ENCODE measurements at regions of chr3 and their contacts with region 1.

Region 1: DNA sequence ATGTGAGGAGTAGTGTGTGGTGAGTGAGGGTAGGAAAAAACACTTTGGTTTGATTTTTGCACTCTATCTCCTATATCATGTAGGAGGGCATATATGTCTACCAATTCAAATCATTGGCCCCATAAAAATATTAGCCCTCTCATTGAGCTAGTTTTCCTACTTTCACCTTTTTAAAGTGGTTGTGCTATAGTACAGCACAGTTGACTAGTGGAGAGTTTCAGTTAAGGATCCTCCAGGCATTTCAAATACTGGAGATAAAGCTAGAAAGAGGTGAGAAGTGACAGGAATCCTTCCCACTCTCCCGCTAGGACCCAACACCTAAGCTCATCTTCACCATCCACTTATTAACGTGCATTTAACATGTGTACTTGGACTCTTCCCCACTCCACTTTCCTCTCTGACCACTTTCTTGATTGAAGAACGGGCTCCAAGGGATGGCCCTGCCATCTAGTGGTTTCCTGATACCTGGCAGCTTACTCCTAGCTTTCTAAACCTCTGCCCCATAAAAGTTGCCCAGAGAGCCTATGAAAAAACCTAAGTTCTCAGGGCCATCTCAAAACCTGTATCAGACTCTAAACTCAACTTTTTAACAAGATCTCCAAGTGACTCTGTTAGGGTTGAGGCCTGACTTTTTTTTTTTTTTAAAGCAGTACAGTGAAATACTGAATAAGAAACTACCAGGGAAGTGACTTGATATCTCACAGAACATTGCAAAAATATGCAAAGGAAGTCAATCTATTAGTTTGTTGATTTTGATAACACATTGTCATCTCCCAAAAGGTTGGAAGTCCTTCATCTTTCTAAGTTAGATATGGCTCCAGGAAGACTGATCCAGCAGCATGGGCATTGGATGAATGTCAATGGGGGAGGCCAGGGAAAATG is 17.9 kb downstream of the IL12A start:
- DNase-seq: no peak
- H3K4me3 Mint-ChIP-seq: no peak overlapping the region
- H3K27ac Mint-ChIP-seq: peak overlapping the region; percentile 46
- H3K4me1 Mint-ChIP-seq: peaks cover 49% of the 10 kb centered on the region
- H3K27me3 Mint-ChIP-seq: no peaks in the 10 kb centered on the region

Region 2: DNA sequence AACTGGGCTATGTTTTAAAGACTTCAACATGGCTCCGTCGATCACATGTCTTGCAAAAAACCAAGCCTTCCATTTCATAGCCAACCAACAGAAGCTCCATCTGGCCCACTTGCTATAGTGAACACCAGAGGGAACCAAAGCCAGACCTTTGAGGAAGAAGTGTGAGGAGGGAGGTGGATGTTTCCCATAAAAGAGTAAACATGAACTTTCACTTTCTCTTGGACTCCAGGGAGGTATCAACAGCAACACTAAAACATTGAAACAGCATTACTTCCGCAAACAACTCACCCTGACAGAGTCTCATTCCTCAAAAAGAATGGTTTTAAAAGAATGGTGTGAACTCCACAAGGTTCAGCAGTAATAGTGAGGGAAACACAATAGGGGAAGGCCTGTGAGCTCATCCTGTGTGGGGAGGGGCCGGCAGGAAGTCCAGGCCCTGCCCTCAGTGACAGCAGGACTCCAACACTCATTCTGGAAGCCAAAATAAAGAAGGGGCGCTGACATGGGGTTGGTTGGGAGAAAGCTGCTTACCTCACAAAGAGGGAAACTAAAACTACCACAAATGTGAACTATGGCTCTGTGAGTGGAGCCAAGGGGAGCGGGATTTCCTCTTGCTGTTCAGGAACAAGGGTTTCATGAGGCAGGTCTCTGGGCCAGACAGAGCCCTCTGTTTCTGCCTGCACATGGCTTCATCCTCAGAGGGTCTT is 76.9 kb before region 1 on chr3:
- intact Hi-C with region 1: loop called (anchors 5 kb)
- DNase-seq: no peak
- H3K4me3 Mint-ChIP-seq: no peak overlapping the region
- H3K27ac Mint-ChIP-seq: no peak overlapping the region
- H3K4me1 Mint-ChIP-seq: peaks cover 9% of the 10 kb centered on the region
- H3K27me3 Mint-ChIP-seq: no peaks in the 10 kb centered on the region

Region 3: DNA sequence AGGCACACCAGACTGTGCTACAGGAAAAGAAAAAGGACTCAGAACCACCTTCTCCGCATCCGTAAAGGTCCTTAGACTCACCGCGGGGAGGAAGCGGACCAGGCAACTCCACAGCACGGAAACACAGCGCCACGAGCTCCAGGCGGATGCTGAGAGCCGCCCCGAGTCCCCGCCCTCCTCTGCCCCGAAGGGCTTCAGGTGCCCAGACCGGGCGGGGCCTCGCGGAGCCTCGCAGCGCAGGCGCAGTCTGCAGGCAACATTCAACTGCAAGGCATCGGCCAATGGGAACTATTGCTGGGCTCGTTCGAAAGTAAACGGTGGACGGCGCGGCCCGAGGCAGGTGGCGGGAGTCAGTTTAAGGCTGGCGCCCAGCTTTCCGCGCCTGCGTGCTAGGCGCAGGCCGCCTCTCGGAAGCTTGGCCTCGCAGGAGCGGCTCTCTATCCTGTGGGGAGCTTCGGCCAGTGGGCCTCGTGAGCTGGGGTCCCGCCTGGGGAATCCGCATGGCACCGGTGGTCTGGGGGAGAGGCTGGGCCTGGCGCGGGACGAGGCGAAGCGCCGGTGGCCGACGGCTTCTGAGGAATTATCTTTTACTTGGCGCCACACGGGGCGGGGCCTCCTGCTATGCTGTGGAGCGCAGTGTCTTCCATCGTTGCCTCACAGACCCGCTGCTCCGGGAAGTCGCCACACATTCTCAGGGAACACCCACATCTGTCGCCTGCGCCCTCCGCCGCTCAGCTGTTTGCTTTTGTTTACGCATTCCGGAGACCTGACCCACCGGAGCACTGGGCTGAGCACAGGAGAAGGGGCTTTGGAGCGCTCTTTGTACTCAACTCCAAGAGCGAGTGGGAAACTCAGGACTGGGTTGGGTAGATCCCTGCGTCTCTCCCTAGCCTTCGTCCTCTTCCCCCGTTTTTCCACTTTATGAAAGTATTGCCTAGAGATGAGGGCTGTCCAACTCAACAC is 443.4 kb after region 1 on chr3 and contains the start of gene TRIM59:
- intact Hi-C with region 1: no loop called
- DNase-seq: peak; percentile 97
- H3K4me3 Mint-ChIP-seq: peak within 1 kb of the TSS; percentile 91
- H3K27ac Mint-ChIP-seq: peak within 1 kb of the TSS; percentile 95
- H3K4me1 Mint-ChIP-seq: peaks cover 33% of the 10 kb centered on the region
- H3K27me3 Mint-ChIP-seq: peaks cover 2% of the 10 kb centered on the region
- total RNA-seq, gene TRIM59: 35.9 and 37.0 TPM in 2 replicates